Activated T-helper 2 cell treated with anti-CD3 and anti-CD28 coated beads, Interferon-gamma antibody, Interleukin-2, Interleukin-4, amounts not matched to agents 10 μg/mL and 5 μg/mL and 100 μg/mL, durations not matched to agents 14 hours and 24 hours and 36 hours (primary cell): ENCODE measurements at regions of chr22 and their contacts with region 1.

Region 1: GRCh38 chr22:41621099-41621910 is at the start of gene XRCC6:
- DNase-seq: peak; percentile 98
- H3K4me3 Mint-ChIP-seq: peak within 1 kb of the TSS; percentile 91
- H3K27ac Mint-ChIP-seq: peak within 1 kb of the TSS; percentile 94
- H3K4me1 Mint-ChIP-seq: peaks cover 37% of the 10 kb centered on the region
- H3K27me3 Mint-ChIP-seq: no peaks in the 10 kb centered on the region
- total RNA-seq, gene XRCC6: 420 and 421 TPM in 2 replicates

Region 2: GRCh38 chr22:41448189-41448808 is 173.0 kb before region 1 on chr22:
- intact Hi-C with region 1: loop called (anchors 10 kb)
- DNase-seq: peak; percentile 91
- H3K4me3 Mint-ChIP-seq: peak overlapping the region; percentile 96
- H3K27ac Mint-ChIP-seq: peak overlapping the region; percentile 98
- H3K4me1 Mint-ChIP-seq: peaks cover 6% of the 10 kb centered on the region
- H3K27me3 Mint-ChIP-seq: no peaks in the 10 kb centered on the region

Region 3: DNA sequence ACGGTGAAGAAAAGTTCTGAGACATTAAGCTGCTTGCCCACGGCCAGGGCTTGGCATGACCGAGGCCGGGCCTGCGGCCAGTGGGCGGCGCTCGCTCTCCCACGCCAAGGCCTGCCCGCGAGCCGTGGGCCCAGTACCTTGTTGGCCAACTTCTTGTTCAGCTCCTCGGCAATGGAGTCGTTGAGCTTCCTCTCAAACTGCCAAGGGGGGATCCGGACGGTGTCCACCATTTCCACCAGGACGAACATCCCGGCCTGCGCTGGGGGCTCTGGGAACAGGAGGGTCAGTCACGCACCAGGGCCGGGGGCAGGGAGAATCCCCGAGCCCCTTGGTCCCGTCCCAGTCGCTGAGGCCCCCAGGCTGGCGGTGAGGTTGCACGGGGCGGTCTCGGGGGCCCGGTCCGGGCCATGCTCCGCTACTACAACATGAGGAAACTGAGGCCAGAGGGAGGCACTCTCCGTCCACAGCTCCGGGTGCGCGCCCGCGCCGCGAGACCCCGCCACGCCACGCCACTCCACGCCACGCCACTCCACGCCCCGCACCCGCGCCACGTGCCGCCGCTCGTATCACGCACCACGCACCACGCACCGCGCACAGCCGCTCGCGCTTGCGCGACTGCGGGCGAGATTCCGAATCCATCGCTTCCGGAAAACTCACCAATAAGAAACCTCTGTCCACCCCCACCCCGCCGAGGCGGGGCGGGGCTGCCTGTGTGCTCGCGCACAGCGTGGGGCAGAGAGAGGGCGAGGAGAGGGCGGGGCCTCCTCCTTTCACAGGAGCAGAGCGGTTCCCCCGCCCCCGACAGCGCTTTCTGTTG is 77.2 kb before region 1 on chr22 and contains the start of gene POLR3H:
- intact Hi-C with region 1: loop called (anchors 1 kb)
- DNase-seq: peak; percentile 96
- H3K4me3 Mint-ChIP-seq: peak within 1 kb of the TSS; percentile 91
- H3K27ac Mint-ChIP-seq: peak within 1 kb of the TSS; percentile 60
- H3K4me1 Mint-ChIP-seq: peaks cover 21% of the 10 kb centered on the region
- H3K27me3 Mint-ChIP-seq: no peaks in the 10 kb centered on the region
- total RNA-seq, gene POLR3H: 28.6 and 33.2 TPM in 2 replicates

Region 4: DNA sequence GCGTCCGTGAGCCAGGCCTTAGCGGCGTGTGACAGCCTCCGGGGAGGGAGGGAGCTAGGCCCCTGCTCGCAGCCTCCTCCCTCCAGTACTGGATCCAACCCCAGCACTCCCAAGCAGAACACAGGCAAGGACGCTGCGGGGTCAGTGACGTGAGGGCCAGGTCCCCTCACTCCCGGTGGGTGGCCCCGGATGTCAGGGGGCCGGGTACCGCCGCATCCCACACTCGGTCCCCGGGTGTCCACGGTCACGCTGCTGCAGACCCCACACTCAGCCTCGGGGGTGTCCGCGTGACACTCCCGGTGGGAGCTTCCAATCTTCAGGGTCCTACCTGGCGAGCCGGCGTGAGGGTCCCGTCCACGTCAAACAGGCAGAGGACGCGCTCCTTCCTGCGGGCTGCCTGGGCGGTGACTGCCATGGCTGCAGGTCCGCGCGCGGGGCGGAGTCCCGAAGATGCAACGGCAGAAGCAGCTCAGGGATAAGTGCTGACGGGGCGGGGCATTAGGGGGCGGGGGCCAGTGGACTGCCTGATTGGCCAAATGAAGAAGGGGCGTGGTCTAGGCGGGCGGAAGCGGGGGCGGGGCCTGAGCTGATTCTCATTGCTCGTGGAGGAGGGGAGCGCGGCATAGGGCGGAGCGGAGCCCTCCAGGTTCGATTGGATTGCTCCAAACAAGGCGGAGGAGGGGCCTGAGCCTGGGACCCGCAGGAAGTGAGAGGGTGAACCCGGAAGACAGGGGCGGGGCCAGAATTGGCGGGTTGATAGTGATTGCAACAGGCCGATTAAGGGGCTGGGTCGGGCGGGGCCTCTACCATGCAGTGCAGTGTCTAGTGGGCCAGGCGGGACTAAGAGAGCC is 31.7 kb before region 1 on chr22 and contains the start of gene PMM1:
- intact Hi-C with region 1: loop called (anchors 1 kb)
- DNase-seq: peak; percentile 100
- H3K4me3 Mint-ChIP-seq: peak within 1 kb of the TSS; percentile 91
- H3K27ac Mint-ChIP-seq: peak within 1 kb of the TSS; percentile 84
- H3K4me1 Mint-ChIP-seq: peaks cover 10% of the 10 kb centered on the region
- H3K27me3 Mint-ChIP-seq: no peaks in the 10 kb centered on the region
- total RNA-seq, gene PMM1: 23.4 and 25.8 TPM in 2 replicates

Region 5: GRCh38 chr22:41603873-41604332 is 17.4 kb before region 1 on chr22:
- intact Hi-C with region 1: loop called (anchors 1 kb)
- DNase-seq: peak; percentile 70
- H3K4me3 Mint-ChIP-seq: no peak overlapping the region
- H3K27ac Mint-ChIP-seq: peak overlapping the region; percentile 6
- H3K4me1 Mint-ChIP-seq: peaks cover 38% of the 10 kb centered on the region
- H3K27me3 Mint-ChIP-seq: peaks cover 4% of the 10 kb centered on the region

Region 6: DNA sequence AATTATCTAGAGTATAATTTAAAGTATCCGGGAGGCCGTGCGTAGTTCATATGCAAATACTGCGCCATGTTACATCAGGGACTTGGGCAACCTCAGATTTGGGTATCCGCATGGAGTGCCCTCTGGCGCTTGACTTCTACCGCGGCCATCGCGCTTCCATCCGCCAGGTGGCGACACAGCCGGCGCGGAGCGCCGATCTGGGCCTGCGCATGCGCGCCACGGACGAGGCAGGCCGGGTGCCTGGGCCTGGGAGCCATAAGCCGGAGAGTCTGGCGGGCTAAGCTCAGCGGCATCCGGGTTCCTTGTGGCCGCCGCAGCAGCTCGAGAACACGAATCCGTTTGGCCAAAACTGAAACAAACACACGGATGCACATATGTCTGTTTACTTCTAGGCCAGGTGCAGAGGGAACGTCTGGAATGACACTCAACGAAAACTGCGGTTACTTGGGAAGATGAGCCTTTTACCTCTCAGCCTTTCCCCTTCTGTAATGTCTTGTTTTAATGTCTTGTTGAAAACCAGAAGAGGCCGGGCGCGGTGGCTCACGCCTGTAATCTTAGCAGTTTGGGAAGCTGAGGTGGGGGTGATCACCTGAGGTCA is 45.5 kb after region 1 on chr22:
- intact Hi-C with region 1: loop called (anchors 2 kb)
- DNase-seq: peak; percentile 95
- H3K4me3 Mint-ChIP-seq: peak overlapping the region; percentile 82
- H3K27ac Mint-ChIP-seq: peak overlapping the region; percentile 96
- H3K4me1 Mint-ChIP-seq: peaks cover 8% of the 10 kb centered on the region
- H3K27me3 Mint-ChIP-seq: no peaks in the 10 kb centered on the region